Activated CD4-positive, alpha-beta memory T cell treated with anti-CD3 and anti-CD28 coated beads for 36 hours (primary cell): ENCODE measurements at regions of chr6 and their contacts with region 1.

Region 1: DNA sequence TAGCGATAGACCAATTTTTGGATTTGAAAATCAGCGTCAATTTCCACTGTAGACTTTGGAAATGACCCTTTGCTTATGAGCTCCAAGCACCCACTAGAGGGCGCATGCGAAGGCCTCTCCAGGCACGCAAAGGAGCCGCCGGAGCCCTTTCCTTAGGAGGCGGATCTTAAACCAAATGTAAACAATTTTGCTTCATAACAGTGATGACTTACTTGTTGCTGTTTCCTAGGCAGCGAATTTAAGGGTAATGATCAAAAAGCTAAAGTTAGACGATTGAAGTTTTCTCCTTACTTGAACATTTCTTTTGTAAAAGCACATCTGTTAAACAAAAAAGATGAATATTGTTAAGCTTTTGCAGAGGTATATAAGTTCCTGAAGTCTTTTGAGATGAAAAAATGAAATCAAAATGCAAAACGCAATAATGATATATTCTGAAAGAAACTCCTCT is 29.2 kb upstream of the EXOC2 start:
- DNase-seq: peak; percentile 84
- H3K4me3 Mint-ChIP-seq: no peak overlapping the region
- H3K27ac Mint-ChIP-seq: no peak overlapping the region
- H3K4me1 Mint-ChIP-seq: peaks cover 3% of the 10 kb centered on the region
- H3K27me3 Mint-ChIP-seq: peaks cover 3% of the 10 kb centered on the region

Region 2: GRCh38 chr6:422433-423054 is 299.6 kb before region 1 on chr6:
- CTCF ChIA-PET with region 1: no interaction called
- POLR2A ChIA-PET with region 1: no interaction called
- intact Hi-C with region 1: no loop called
- DNase-seq: peak; percentile 87
- H3K4me3 Mint-ChIP-seq: no peak overlapping the region
- H3K27ac Mint-ChIP-seq: peak overlapping the region; percentile 87
- H3K4me1 Mint-ChIP-seq: peaks cover 30% of the 10 kb centered on the region
- H3K27me3 Mint-ChIP-seq: no peaks in the 10 kb centered on the region

Region 3: GRCh38 chr6:593139-593906 is 128.8 kb before region 1 on chr6:
- CTCF ChIA-PET with region 1: interaction called, 32 read pairs
- POLR2A ChIA-PET with region 1: no interaction called
- intact Hi-C with region 1: loop called (anchors 1 kb)
- DNase-seq: peak; percentile 75
- H3K4me3 Mint-ChIP-seq: no peak overlapping the region
- H3K27ac Mint-ChIP-seq: no peak overlapping the region
- H3K4me1 Mint-ChIP-seq: peaks cover 5% of the 10 kb centered on the region
- H3K27me3 Mint-ChIP-seq: no peaks in the 10 kb centered on the region

Region 4: DNA sequence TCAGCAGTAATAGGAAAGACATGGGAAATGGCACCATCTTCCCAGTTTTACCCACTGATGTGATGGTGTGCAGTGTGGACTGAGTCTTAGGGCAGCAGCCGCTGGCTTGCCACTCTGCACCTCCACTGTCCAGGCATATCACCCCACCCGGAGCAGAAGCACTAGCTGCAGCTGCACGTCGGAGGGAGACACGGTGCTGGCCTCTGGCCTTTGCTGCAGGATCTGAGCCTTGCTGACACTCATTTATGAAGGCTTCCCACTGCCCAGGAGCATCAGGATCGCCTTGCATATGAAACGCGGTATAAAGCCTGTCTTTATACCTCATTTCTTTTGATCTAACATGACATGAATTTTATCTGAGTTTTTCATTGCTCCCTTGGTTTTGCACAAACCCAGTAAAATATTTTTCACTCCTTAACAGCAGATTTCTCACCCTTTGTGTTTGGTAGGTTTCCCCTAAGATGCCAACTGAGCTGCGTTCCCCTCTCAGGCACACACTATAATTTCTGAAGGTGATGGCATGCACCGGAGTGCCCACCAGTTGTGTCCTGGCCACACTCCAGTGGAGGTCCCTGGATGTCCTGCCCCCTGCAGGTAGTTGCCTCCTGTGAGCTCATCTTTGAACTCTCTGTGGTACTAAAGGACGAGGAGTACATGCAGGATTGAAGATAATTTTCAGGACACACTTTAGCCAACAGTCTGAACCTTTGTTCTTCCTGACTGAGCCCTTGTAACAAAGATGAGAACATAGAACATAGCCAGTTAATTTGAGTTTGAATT is 20.2 kb before region 1 on chr6:
- CTCF ChIA-PET with region 1: interaction called, 42 read pairs
- POLR2A ChIA-PET with region 1: no interaction called
- intact Hi-C with region 1: no loop called
- DNase-seq: no peak
- H3K4me3 Mint-ChIP-seq: no peak overlapping the region
- H3K27ac Mint-ChIP-seq: no peak overlapping the region
- H3K4me1 Mint-ChIP-seq: no peaks in the 10 kb centered on the region
- H3K27me3 Mint-ChIP-seq: peaks cover 1% of the 10 kb centered on the region

Region 5: GRCh38 chr6:733431-734219 is 11.5 kb after region 1 on chr6:
- CTCF ChIA-PET with region 1: interaction called, 10 read pairs
- POLR2A ChIA-PET with region 1: no interaction called
- intact Hi-C with region 1: no loop called
- DNase-seq: no peak
- H3K4me3 Mint-ChIP-seq: no peak overlapping the region
- H3K27ac Mint-ChIP-seq: no peak overlapping the region
- H3K4me1 Mint-ChIP-seq: no peaks in the 10 kb centered on the region
- H3K27me3 Mint-ChIP-seq: peaks cover 5% of the 10 kb centered on the region

Region 6: GRCh38 chr6:786946-787763 is 65.1 kb after region 1 on chr6:
- CTCF ChIA-PET with region 1: interaction called, 9 read pairs
- POLR2A ChIA-PET with region 1: no interaction called
- intact Hi-C with region 1: loop called (anchors 1 kb)
- DNase-seq: peak; percentile 37
- H3K4me3 Mint-ChIP-seq: no peak overlapping the region
- H3K27ac Mint-ChIP-seq: no peak overlapping the region
- H3K4me1 Mint-ChIP-seq: peaks cover 17% of the 10 kb centered on the region
- H3K27me3 Mint-ChIP-seq: peaks cover 10% of the 10 kb centered on the region

Region 7: DNA sequence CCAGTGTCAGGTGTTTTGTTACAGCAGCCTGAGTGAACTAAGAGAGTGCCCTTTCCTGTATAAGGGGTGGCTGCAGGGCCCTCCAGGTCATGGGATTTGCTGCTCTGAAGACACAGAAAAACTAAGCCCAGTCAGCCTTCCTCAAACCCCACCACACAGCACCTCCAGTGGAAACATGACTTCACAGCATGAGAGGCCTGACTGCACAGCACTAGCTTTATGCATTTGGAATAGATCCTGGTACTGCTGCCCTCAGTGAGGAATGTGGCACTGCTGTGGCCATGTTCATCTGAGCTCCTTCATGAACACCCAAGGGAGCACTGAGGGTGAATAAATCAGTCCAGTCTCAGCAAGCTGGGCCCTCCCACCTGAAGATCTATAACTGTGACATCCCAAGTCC is 293.7 kb after region 1 on chr6:
- CTCF ChIA-PET with region 1: no interaction called
- POLR2A ChIA-PET with region 1: no interaction called
- intact Hi-C with region 1: no loop called
- DNase-seq: no peak
- H3K4me3 Mint-ChIP-seq: no peak overlapping the region
- H3K27ac Mint-ChIP-seq: no peak overlapping the region
- H3K4me1 Mint-ChIP-seq: no peaks in the 10 kb centered on the region
- H3K27me3 Mint-ChIP-seq: peaks cover 10% of the 10 kb centered on the region

Region 8: DNA sequence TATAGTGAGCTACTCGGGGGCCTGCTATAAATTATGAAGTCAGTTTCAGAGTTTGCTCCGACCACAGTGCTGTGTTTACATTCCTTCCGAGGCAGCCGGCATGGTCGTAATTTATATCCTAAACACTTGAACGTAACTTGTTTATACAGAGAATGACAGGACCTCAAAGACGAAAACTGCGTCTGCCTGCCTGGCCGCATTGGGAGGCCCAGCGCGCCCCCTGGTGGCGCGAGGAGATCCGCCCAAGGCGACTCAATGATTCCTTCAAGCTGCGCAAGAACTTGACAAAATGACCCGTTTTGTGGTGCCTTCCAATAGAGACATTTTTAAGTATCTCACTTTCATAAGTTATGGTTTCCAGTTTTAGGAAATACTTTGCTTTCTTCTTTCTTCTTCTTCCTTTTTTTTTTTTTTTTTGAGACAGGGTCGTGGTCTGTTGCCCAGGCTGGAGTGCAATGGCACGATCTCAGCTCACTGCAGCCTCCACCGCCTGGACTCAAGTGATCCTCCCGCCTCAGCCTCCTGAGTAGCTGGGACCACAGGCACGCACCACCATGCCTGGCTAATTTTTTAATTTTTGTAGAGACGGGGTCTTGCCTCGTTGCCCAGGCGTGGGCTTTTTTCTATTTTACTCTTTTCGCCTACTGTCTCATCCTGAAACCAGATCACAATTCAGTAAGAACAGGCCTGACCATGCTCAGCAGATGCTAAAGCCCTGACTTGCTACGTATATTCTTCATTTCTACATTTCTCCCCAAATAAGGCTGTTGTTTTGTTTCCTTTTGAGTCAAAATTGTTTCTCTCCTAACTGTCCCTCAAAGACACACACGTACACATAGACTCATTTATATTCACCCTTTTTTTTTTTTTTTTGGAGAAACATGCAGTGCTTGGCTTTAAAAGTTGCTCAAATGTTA is 675.1 kb after region 1 on chr6:
- CTCF ChIA-PET with region 1: interaction called, 7 read pairs
- POLR2A ChIA-PET with region 1: no interaction called
- intact Hi-C with region 1: loop called (anchors 10 kb)
- DNase-seq: peak; percentile 77
- H3K4me3 Mint-ChIP-seq: peak overlapping the region; percentile 12
- H3K27ac Mint-ChIP-seq: no peak overlapping the region
- H3K4me1 Mint-ChIP-seq: peaks cover 6% of the 10 kb centered on the region
- H3K27me3 Mint-ChIP-seq: peaks cover 45% of the 10 kb centered on the region